HepG2 (cell line): ENCODE measurements at regions of chr19 and their contacts with region 1.

Region 1: DNA sequence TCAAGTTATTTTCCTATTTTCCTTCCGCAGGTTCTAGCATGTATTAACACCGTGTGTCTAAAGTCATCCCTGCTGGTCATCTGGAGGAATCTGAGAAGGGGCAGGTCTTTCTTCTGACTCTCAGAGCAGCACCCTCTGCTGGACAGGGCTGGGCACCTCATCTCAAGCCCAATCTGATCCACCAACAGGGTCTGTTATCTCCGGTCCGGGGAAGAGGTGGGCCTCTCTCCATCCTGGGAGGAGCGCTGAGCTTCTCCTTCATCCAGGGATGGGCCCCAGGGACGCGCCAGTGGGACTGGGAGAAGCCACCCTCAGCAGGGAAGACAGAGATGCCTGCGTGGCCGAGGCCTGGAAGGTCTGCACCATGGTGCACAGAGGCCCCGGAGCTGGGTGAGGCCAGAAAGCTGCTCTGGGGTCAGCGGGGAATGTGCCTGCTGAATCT is 26.0 kb upstream of the ZNF331 start:
- DNase-seq: peak; percentile 71
- ATAC-seq: peak; percentile 84
- H3K4me3 ChIP-seq: no peak overlapping the region
- H3K27ac ChIP-seq: no peak overlapping the region
- H3K4me1 ChIP-seq: peaks cover 44% of the 10 kb centered on the region
- H3K27me3 ChIP-seq: no peaks in the 10 kb centered on the region
- CTCF ChIP-seq: peak; percentile 80
- EP300 ChIP-seq: no peak
- POLR2A ChIP-seq: no peak
- RAD21 ChIP-seq: peak; percentile 65

Region 2: GRCh38 chr19:53424968-53425597 is 86.9 kb before region 1 on chr19:
- CTCF ChIA-PET with region 1: interaction called, 11 read pairs
- POLR2A ChIA-PET with region 1: no interaction called
- in situ Hi-C with region 1: loop called (anchors 5 kb)
- intact Hi-C with region 1: loop called (anchors 2 kb)
- DNase-seq: peak; percentile 67
- ATAC-seq: peak; percentile 86
- H3K4me3 ChIP-seq: no peak overlapping the region
- H3K27ac ChIP-seq: no peak overlapping the region
- H3K4me1 ChIP-seq: peaks cover 26% of the 10 kb centered on the region
- H3K27me3 ChIP-seq: no peaks in the 10 kb centered on the region
- CTCF ChIP-seq: peak; percentile 94
- EP300 ChIP-seq: no peak
- POLR2A ChIP-seq: no peak
- RAD21 ChIP-seq: peak; percentile 66

Region 3: GRCh38 chr19:53553884-53554791 is 42.2 kb after region 1 on chr19:
- CTCF ChIA-PET with region 1: no interaction called
- POLR2A ChIA-PET with region 1: no interaction called
- in situ Hi-C with region 1: no loop called
- intact Hi-C with region 1: no loop called
- DNase-seq: no peak
- ATAC-seq: no peak
- H3K4me3 ChIP-seq: no peak overlapping the region
- H3K27ac ChIP-seq: no peak overlapping the region
- H3K4me1 ChIP-seq: no peaks in the 10 kb centered on the region; the same call in 1 of the 2 replicates
- H3K27me3 ChIP-seq: no peaks in the 10 kb centered on the region
- CTCF ChIP-seq: no peak
- EP300 ChIP-seq: no peak
- POLR2A ChIP-seq: no peak
- RAD21 ChIP-seq: no peak

Region 4: DNA sequence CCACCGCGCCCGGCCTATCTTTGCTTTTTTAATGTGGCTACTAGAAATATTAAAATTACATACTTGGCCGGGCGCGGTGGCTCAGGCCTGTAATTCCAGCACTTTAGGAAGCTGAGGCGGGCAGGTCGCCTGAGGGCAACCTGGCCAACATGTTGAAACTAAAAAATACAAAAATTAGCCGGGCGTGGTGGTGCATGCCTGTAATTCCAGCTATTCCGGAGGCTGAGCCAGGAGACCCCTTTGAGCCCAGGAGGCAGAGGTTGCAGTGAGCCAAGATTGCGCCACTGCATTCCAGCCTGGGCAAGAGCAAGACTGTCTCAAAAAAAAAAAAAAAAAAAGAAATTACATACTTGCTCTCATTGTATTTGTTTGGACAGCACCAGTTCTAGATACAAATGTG is 85.1 kb after region 1 on chr19:
- CTCF ChIA-PET with region 1: no interaction called
- POLR2A ChIA-PET with region 1: no interaction called
- in situ Hi-C with region 1: no loop called
- intact Hi-C with region 1: no loop called
- DNase-seq: peak; percentile 63
- ATAC-seq: peak; percentile 53; the same call in 2 of the 3 replicates
- H3K4me3 ChIP-seq: no peak overlapping the region
- H3K27ac ChIP-seq: no peak overlapping the region
- H3K4me1 ChIP-seq: peaks cover 46% of the 10 kb centered on the region
- H3K27me3 ChIP-seq: no peaks in the 10 kb centered on the region
- CTCF ChIP-seq: no peak
- EP300 ChIP-seq: peak in 1 of 2 experiments; percentile 50; a peak in 1 of 4 replicates
- POLR2A ChIP-seq: no peak
- RAD21 ChIP-seq: no peak